Activated T-helper 2 cell treated with anti-CD3 and anti-CD28 coated beads, Interferon-gamma antibody, Interleukin-2, Interleukin-4, amounts not matched to agents 10 μg/mL and 5 μg/mL and 100 μg/mL, durations not matched to agents 14 hours and 24 hours and 36 hours (primary cell): ENCODE measurements at regions of chr11 and their contacts with region 1.

Region 1: DNA sequence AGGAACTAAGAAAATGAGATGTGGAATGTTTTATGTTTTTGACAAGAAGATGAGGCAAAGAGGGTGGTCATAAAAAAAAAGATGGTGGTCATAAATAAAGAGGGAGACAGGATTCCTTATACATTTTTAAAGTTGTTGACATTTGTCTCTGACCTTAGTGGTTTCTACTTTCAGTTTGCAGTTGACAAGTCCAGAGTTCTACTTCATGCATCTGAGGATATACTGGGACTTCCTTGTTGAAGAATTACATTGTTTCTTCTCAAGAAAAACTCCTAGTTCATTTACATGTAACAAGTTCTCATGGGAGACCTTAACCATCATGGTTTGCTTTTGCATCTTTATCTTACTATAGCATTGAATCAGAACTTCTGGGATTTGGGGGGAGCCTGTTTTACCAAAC is 1.2 kb downstream of the OR6X1 start:
- DNase-seq: no peak
- H3K4me3 Mint-ChIP-seq: no peak overlapping the region
- H3K27ac Mint-ChIP-seq: peak overlapping the region; percentile 90
- H3K4me1 Mint-ChIP-seq: peaks cover 60% of the 10 kb centered on the region
- H3K27me3 Mint-ChIP-seq: peaks cover 1% of the 10 kb centered on the region

Region 2: DNA sequence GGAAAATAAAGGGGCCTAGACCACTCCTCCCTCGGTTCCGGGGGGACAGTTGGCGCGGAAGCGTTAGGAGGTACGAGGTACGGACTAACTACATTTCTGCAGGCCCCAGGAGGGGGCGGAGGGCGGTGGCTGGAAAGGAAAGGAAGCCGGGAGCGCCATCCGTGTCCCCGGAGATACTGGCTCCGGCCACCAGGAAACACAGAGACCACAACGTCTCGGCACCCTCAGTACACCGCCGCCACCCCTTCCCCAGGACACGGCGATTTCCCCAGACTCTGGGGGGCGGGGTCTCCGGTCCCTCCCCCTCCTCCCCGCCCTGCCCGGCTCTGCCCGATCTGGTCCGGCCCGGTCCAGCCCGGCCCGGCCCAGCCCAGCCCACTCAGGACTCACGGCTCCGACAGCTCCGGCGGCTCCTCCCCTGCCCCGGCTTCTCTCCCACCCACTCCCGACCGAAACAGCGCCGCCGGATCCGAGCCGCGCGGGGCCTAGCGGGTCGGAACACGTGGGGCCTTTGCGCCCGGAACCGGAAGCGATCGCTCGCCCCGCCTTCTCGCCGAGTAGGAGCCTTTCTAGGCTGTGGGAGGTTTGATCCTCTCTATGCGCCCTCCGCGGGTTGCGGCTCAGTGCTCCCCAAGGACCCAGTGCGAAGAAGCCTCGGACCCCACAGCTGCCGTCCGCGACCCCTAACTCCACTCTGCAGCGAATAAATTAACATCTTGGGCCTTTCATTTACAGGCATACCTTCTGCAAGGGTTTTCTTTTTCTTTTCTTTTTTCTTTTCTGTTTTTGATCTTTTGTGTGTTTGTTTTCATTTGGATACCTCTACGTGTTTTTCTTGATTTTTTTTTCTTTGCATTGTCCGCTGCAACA is 11.7 kb before region 1 on chr11 and contains the start of gene ZNF202:
- intact Hi-C with region 1: loop called (anchors 1 kb)
- DNase-seq: peak; percentile 86
- H3K4me3 Mint-ChIP-seq: peak within 1 kb of the TSS; percentile 89
- H3K27ac Mint-ChIP-seq: peak within 1 kb of the TSS; percentile 87
- H3K4me1 Mint-ChIP-seq: peaks cover 33% of the 10 kb centered on the region
- H3K27me3 Mint-ChIP-seq: peaks cover 10% of the 10 kb centered on the region
- total RNA-seq, gene ZNF202: 19.2 and 22.3 TPM in 2 replicates

Region 3: DNA sequence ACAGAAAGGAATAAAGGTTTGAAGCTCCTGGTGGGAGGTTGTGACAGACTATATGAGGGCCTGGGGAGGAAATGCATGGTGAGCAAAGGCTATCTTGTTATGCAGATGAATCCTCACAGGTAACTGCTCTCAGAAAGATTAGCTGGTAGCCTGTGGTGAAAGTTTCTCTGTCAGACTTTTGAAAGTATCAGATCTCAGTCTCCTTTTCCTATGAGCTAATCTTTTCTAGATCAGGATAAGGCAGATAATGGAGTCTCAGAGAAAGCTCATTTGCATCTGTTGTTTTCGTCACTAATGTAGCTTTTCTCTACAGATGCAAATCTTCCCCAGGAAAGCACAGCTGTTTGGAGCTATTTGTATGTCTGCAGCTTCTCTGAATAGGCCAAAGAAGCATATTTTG is 22.2 kb after region 1 on chr11:
- intact Hi-C with region 1: no loop called
- DNase-seq: no peak
- H3K4me3 Mint-ChIP-seq: no peak overlapping the region
- H3K27ac Mint-ChIP-seq: no peak overlapping the region
- H3K4me1 Mint-ChIP-seq: peaks cover 3% of the 10 kb centered on the region
- H3K27me3 Mint-ChIP-seq: peaks cover 3% of the 10 kb centered on the region

Region 4: DNA sequence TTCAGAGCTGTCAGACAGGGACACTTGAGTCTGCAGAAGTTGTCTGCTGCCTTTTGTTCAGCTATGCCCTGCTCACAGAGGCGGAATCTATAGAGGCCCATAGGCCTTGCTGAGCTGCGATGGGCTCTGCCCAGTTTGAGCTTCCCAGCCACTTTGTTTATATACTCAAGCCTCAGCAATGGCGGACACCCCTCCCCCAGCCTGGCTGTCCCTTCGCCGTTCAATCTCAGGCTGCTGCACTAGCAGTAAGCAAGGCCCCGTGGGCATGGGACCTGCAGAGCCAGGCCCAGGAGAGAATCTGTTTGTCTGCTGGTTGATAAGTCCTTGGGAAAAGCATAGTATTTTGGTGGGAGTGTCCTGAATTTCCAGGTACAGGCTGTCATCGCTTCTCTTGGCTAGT is 76.6 kb after region 1 on chr11:
- intact Hi-C with region 1: no loop called
- DNase-seq: no peak
- H3K4me3 Mint-ChIP-seq: no peak overlapping the region
- H3K27ac Mint-ChIP-seq: no peak overlapping the region
- H3K4me1 Mint-ChIP-seq: no peaks in the 10 kb centered on the region
- H3K27me3 Mint-ChIP-seq: peaks cover 2% of the 10 kb centered on the region

Region 5: DNA sequence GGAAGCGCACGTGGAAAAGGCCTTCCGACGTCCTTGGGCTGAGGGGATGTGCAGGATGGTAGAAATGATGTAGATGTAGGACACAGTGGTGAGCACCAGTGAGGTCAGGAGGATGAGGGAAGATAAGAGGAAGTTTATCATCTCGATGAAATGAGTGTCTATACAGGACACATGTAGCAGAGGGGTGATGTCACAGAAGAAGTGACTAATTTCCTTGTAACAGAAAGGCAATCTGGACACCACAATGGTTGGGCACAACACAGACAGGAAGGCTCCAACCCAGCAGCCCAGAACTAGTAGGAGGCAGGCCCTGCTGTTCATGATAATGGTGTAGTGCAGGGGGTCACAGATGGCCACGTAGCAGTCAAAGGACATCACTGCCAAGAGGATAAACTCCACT is 88.1 kb after region 1 on chr11:
- intact Hi-C with region 1: loop called (anchors 2 kb)
- DNase-seq: no peak
- H3K4me3 Mint-ChIP-seq: no peak overlapping the region
- H3K27ac Mint-ChIP-seq: peak overlapping the region; percentile 41
- H3K4me1 Mint-ChIP-seq: peaks cover 7% of the 10 kb centered on the region
- H3K27me3 Mint-ChIP-seq: peaks cover 11% of the 10 kb centered on the region